CD14-positive monocyte (primary cell): ENCODE measurements at regions of chr20 and their contacts with region 1.

Region 1: DNA sequence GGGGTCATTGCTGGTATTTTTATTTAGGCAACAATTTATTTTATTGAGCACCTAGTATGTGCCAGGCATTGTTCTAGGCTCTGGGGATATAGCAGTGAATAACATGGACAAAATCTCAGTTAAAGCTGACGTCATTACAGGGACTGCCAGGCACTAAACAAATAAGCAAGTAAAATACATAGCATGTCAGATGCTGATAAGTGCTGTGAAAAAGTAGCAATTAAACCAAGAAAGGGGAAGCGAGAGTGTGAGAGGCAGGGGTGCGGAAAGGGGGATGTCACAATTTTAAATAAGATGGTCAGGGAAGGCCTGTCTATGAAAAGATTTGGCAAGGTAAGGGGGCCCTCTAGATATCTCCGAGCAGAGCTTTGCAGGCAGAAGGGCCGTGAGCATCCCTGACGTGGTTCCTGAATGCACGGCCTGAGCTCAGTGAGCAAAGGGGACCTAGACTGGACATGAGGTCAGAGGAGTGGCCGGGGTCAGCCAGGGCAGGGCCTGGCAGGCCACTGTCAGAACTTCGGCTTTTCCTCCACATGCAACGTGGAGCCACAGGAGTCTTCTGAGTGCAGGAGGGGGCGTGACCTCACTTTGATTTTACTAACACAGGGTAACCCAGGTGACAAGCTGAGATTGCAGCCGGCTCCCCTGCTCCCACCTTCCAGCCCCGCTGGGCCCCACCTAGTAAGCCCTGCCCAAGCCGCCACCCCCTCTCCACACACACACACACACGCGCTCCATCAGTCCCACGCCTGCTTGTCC is 24.2 kb upstream of the SIRPA start:
- DNase-seq: peak; percentile 85 to 87 (median 87)
- H3K4me3 ChIP-seq: peak overlapping the region in 1 of 3 experiments; percentile 17
- H3K4me3 Mint-ChIP-seq: peak overlapping the region; percentile 6 to 35
- H3K27ac ChIP-seq: peak overlapping the region; percentile 58 to 83
- H3K27ac Mint-ChIP-seq: peak overlapping the region; percentile 87 to 96 (median 91)
- H3K4me1 ChIP-seq: peaks cover 88 to 92% of the 10 kb centered on the region in 2 donors
- H3K4me1 Mint-ChIP-seq: peaks cover 87% of the 10 kb centered on the region
- H3K27me3 ChIP-seq: no peaks in the 10 kb centered on the region
- H3K27me3 Mint-ChIP-seq: peaks cover 0 to 5% (median 3%) of the 10 kb centered on the region in 3 donors
- CTCF ChIP-seq: no peak

Region 2: GRCh38 chr20:1802385-1803060 is 68.4 kb before region 1 on chr20:
- intact Hi-C with region 1: loop called (anchors 1 to 5 kb)
- DNase-seq: peak; percentile 73 to 84 (median 83)
- H3K4me3 ChIP-seq: peak overlapping the region; percentile 55 to 78 (median 69)
- H3K4me3 Mint-ChIP-seq: peak overlapping the region; percentile 85 to 97
- H3K27ac ChIP-seq: peak overlapping the region; percentile 86 to 95
- H3K27ac Mint-ChIP-seq: peak overlapping the region; percentile 87 to 97 (median 94)
- H3K4me1 ChIP-seq: peaks cover 56 to 65% of the 10 kb centered on the region in 2 donors
- H3K4me1 Mint-ChIP-seq: peaks cover 56% of the 10 kb centered on the region
- H3K27me3 ChIP-seq: no peaks in the 10 kb centered on the region
- H3K27me3 Mint-ChIP-seq: peaks cover 0 to 1% (median 0%) of the 10 kb centered on the region in 3 donors
- CTCF ChIP-seq: peak; percentile 82

Region 3: DNA sequence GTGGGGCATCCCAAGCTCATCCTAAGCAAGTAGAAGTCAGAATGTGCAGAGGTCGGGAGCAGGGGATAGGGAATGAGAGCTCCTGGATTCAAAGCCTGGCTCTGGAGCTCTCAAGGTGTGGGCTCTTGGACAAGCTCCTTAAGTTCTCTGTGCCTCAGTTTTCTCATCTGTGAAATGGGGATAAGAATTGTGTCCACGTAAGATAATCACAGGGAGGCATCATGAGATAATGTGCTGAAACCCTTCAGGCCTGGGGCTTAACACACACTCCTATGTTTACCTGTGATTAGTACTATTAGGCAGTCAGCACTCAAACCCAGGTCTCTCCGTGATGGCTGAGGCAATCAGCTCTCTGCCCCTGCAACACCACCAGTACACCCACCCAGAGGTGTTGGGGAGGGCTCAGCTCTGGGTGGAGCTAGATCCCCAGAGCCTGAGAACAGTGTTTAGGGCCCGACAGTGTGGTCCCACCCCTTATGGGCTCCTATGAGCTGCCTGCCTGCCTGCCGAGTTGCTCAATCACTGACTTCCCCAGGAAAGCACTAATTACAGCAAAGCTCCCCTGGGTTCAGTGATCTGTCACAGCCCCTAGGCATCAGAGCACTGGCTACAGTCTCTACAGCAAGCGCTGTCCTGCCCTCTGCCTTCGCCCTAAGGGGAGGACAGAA is 18.0 kb after region 1 on chr20:
- intact Hi-C with region 1: loop called in 1 of 2 experiments (anchors 2 kb)
- DNase-seq: peak; percentile 85 to 95 (median 88)
- H3K4me3 ChIP-seq: peak overlapping the region in 1 of 3 experiments; percentile 38
- H3K4me3 Mint-ChIP-seq: peak overlapping the region in 1 of 2 donors; percentile 62
- H3K27ac ChIP-seq: peak overlapping the region; percentile 18 to 23
- H3K27ac Mint-ChIP-seq: peak overlapping the region; percentile 45 to 84 (median 75)
- H3K4me1 ChIP-seq: peaks cover 53 to 64% of the 10 kb centered on the region in 2 donors
- H3K4me1 Mint-ChIP-seq: peaks cover 77% of the 10 kb centered on the region
- H3K27me3 ChIP-seq: no peaks in the 10 kb centered on the region
- H3K27me3 Mint-ChIP-seq: peaks cover 12 to 27% (median 18%) of the 10 kb centered on the region in 3 donors
- CTCF ChIP-seq: peak; percentile 13

Region 4: DNA sequence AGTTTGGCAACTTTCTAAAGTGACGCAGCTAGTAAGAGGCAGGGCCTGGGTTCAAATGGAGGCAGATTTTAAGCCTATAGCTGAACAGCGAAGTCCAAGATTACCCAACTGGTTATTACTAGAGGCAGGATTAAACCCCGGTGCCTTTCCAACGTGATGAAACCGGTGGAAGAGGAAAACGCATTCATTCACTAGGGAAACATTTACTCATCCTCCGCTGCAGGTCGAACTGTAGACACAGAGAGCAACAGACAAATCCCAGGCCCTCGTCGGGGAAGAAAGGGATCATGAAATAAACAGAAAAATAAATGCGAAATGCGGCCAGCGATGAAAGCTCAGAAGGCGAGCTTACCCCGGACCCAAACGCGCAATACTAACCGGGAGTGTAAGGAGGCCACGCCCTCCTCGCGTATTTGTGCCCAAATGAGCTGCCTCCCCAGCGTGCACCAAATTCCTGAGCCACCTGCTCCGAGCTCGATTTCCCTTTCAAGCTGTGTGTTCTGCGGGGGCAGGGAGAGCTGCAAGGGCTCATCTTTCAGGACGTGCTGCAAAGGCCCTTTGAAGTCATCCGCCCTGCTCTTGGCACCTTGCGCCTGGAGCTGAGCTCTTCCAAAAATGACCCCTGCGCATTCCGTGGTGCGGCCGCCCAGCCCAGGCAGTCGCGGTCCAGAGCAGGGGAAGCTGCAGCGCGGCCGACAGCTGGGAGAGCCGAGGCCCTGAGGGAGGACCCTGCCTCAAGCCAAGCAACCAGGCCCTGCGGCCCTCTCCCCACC is 76.0 kb after region 1 on chr20:
- intact Hi-C with region 1: loop called in 1 of 2 experiments (anchors 2 kb)
- DNase-seq: peak; percentile 95 to 97 (median 95)
- H3K4me3 ChIP-seq: peak overlapping the region; percentile 19 to 72 (median 29)
- H3K4me3 Mint-ChIP-seq: peak overlapping the region; percentile 79 to 95
- H3K27ac ChIP-seq: peak overlapping the region; percentile 96 to 97
- H3K27ac Mint-ChIP-seq: peak overlapping the region; percentile 97 to 100 (median 99)
- H3K4me1 ChIP-seq: peaks cover 88 to 95% of the 10 kb centered on the region in 2 donors
- H3K4me1 Mint-ChIP-seq: peaks cover 92% of the 10 kb centered on the region
- H3K27me3 ChIP-seq: no peaks in the 10 kb centered on the region
- H3K27me3 Mint-ChIP-seq: peaks cover 0 to 1% (median 0%) of the 10 kb centered on the region in 3 donors
- CTCF ChIP-seq: no peak